ENCODE measurements at regions of chr14 and their contacts with region 1.

Region 1: GRCh38 chr14:22314181-22314820 is 274.7 kb downstream of the DAD1 start:
- DNase-seq: no peak
- ATAC-seq: peak; percentile 86
- H3K4me3 ChIP-seq: no peak overlapping the region
- H3K27ac ChIP-seq: no peak overlapping the region
- H3K4me1 ChIP-seq: no peaks in the 10 kb centered on the region
- H3K27me3 ChIP-seq: no peaks in the 10 kb centered on the region; the same call in 1 of the 2 replicates
- CTCF ChIP-seq: peak; percentile 74

Region 2: GRCh38 chr14:22472935-22473854 is 158.9 kb after region 1 on chr14:
- CTCF ChIA-PET with region 1: interaction called, 3 read pairs
- POLR2A ChIA-PET with region 1: no interaction called
- in situ Hi-C with region 1: no loop called
- intact Hi-C with region 1: loop called (anchors 10 kb)
- DNase-seq: no peak
- ATAC-seq: no peak
- H3K4me3 ChIP-seq: no peak overlapping the region
- H3K27ac ChIP-seq: no peak overlapping the region
- H3K4me1 ChIP-seq: no peaks in the 10 kb centered on the region
- H3K27me3 ChIP-seq: no peaks in the 10 kb centered on the region; the same call in none of the 2 replicates
- CTCF ChIP-seq: peak; percentile 58